ENCODE measurements at regions of chrX and their contacts with region 1.

Region 1: DNA sequence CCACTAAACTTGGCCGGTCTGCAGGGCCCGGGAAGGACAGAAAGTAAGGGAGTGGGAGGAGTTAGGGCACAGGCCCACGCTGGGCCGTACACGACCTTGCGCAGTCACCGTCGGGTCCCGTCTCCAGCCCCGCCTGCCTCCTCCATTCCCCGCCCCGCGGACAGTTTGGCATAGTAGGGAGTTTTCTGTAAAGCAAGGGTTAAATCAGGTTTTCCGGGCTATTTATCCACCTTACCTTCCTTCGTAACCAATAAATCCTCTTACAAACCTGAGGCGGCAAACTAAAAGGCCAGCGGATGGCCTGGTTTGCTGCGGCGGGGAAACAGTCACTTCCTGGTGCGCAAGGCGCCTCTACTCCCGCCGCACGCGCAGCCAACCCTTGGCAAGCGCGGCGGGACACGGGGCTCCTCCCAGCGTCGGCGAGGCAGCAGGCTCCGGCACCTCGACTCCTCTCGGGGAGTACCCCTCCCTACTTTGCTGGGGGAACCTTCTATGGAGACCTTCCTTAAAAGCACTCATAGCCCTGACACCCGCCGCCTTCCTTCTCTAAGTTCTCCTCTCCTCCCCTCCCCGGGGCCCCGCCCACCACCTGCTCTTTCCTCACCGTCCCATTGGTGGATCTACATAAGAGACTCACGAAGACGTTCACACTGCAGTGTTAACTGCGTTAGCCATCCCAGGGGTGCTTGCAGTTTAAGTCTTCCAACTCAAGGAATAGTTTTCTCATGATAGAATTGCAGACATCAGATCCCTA is at the start of gene TRMT2B:
- DNase-seq: peak; percentile 78
- H3K4me3 Mint-ChIP-seq: peak within 1 kb of the TSS; percentile 86
- H3K27ac Mint-ChIP-seq: peak within 1 kb of the TSS; percentile 96
- H3K4me1 Mint-ChIP-seq: peaks cover 18% of the 10 kb centered on the region
- H3K27me3 Mint-ChIP-seq: no peaks in the 10 kb centered on the region
- total RNA-seq, gene TRMT2B: 21.5 and 24.4 TPM in 2 replicates

Region 2: GRCh38 chrX:100289066-100289558 is 762.6 kb before region 1 on chrX:
- intact Hi-C with region 1: no loop called
- DNase-seq: no peak
- H3K4me3 Mint-ChIP-seq: no peak overlapping the region
- H3K27ac Mint-ChIP-seq: no peak overlapping the region
- H3K4me1 Mint-ChIP-seq: no peaks in the 10 kb centered on the region
- H3K27me3 Mint-ChIP-seq: no peaks in the 10 kb centered on the region

Region 3: GRCh38 chrX:100928660-100929613 is 122.8 kb before region 1 on chrX and contains the start of gene XKRX:
- intact Hi-C with region 1: loop called (anchors 10 kb)
- DNase-seq: peak; percentile 8
- H3K4me3 Mint-ChIP-seq: peak within 1 kb of the TSS; percentile 79
- H3K27ac Mint-ChIP-seq: no peak within 1 kb of the TSS
- H3K4me1 Mint-ChIP-seq: peaks cover 18% of the 10 kb centered on the region
- H3K27me3 Mint-ChIP-seq: peaks cover 1% of the 10 kb centered on the region
- total RNA-seq, gene XKRX: 0.23 and 0.25 TPM in 2 replicates

Region 4: DNA sequence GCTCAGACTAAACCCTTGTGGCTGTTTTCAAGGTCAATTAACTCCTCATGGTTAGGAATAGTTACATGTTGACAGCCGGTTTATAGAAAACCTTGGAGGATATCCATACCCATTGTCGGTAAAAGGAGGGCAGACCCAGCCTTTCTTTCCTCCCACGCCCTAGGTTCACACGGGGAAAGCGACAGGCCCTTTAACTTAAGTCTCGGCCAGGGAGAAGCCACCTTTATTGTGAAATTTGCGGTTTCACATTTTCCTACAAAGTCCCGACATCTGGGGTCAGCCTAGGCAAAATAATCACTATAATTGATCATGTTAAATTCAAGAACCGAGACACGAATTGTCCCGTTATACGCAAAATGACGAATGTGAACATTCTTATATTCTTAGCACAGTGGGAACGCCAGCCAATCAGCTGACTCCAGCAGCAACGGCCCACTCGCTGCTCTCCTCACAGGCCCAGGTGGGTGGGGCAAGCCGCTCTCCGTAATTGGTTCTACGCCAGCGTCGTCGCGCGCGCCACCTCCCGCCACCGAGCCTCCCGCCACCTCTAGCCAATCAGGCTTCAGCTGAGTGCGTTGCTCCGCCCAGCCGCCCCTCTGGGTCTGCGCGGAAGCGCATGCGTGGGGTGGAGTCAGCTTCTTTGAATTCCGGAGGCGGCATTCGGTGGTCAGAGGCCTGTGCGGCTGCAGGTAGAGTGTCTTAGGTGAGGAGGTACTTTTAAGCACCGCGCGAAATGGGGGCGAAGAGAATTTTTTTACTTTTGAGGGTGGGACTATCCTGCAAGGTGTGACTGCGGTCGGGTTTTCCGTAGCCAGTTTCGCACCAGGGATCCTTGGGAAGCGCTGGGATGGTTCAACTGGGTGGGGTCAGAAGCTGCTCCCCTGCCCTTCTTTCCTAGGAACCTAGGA is 46.1 kb after region 1 on chrX and contains the start of gene CENPI:
- intact Hi-C with region 1: loop called (anchors 2 kb)
- DNase-seq: peak; percentile 93
- H3K4me3 Mint-ChIP-seq: peak within 1 kb of the TSS; percentile 96
- H3K27ac Mint-ChIP-seq: peak within 1 kb of the TSS; percentile 84
- H3K4me1 Mint-ChIP-seq: peaks cover 20% of the 10 kb centered on the region
- H3K27me3 Mint-ChIP-seq: no peaks in the 10 kb centered on the region
- total RNA-seq, gene CENPI: 20.7 and 20.9 TPM in 2 replicates

Region 5: GRCh38 chrX:101206471-101206870 is 154.7 kb after region 1 on chrX:
- intact Hi-C with region 1: loop called (anchors 5 kb)
- DNase-seq: no peak
- H3K4me3 Mint-ChIP-seq: no peak overlapping the region
- H3K27ac Mint-ChIP-seq: no peak overlapping the region
- H3K4me1 Mint-ChIP-seq: peaks cover 12% of the 10 kb centered on the region
- H3K27me3 Mint-ChIP-seq: no peaks in the 10 kb centered on the region